ENCODE measurements at regions of chr4 and their contacts with region 1.

Region 1: DNA sequence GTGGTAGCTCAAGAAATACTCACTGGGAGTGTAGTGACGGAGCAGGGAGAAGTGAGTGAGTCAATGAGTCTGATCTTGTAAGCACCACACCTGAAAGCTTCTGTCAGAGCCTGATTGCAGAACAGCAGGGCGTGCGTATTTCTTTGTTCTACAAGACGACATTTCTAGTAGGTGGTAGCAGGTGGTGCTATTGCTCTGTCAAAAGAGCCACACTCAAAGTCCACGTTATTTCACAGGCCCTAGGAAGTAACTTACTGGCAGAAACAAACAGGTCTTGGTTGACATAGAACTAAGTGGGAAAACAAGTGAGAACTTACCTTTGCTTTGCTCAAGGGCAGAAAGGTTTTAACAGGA is 46.4 kb upstream of the SPRY1 start:
- DNase-seq: no peak
- H3K4me3 ChIP-seq: no peak overlapping the region
- H3K4me3 Mint-ChIP-seq: no peak overlapping the region
- H3K27ac ChIP-seq: no peak overlapping the region
- H3K27ac Mint-ChIP-seq: no peak overlapping the region
- H3K4me1 ChIP-seq: peaks cover 10 to 19% of the 10 kb centered on the region in 2 donors
- H3K4me1 Mint-ChIP-seq: peaks cover 15% of the 10 kb centered on the region
- H3K27me3 ChIP-seq: no peaks in the 10 kb centered on the region
- H3K27me3 Mint-ChIP-seq: peaks cover 0 to 1% (median 0%) of the 10 kb centered on the region in 3 donors
- CTCF ChIP-seq: no peak

Region 2: GRCh38 chr4:123244137-123244536 is 106.0 kb before region 1 on chr4:
- intact Hi-C with region 1: loop called in 1 of 2 experiments (anchors 10 kb)
- DNase-seq: peak; percentile 13 to 24 (median 15)
- H3K4me3 ChIP-seq: no peak overlapping the region
- H3K4me3 Mint-ChIP-seq: peak overlapping the region in 1 of 2 donors; percentile 35
- H3K27ac ChIP-seq: no peak overlapping the region
- H3K27ac Mint-ChIP-seq: peak overlapping the region in 3 of 7 donors; percentile 36 to 68 (median 46)
- H3K4me1 ChIP-seq: peaks cover 15 to 26% of the 10 kb centered on the region in 2 donors
- H3K4me1 Mint-ChIP-seq: peaks cover 42% of the 10 kb centered on the region
- H3K27me3 ChIP-seq: no peaks in the 10 kb centered on the region
- H3K27me3 Mint-ChIP-seq: peaks cover 0 to 1% (median 0%) of the 10 kb centered on the region in 3 donors
- CTCF ChIP-seq: no peak